PC-3 (cell line): ENCODE measurements at regions of chr9 and their contacts with region 1.

Region 1: DNA sequence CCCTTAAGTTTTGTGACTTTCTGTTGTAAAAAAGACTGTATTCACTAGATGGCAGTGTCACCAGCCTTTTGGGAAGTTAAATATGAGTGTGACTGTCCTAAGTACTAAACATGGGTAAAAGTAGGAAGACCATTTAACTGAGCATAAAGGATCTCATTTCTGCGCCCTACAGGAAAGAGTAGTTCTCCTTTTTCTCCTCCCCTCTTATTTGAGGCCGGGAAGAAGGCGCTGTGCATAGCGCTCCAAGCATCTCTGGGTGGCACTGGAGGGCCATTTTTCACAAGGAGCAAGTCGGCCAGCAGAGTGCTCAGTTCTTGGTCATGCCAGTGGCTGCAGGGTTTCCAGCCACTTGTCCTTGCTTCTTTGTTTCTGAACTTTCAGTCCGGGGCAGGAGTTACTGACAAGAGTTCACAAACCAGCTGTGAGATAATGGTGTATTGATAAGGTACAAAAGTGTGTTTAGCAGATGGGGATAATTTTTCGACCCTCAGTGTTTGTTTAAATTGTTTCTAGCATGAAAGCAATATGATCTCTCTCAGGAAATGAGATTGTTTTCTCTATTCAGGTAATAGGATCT is 227.6 kb upstream of the DMRT1 start:
- DNase-seq: peak; percentile 77
- ATAC-seq: peak; percentile 97
- H3K4me3 ChIP-seq: no peak overlapping the region
- H3K27ac ChIP-seq: no peak overlapping the region
- H3K4me1 ChIP-seq: peaks cover 4% of the 10 kb centered on the region; the same call in 1 of the 2 replicates
- H3K27me3 ChIP-seq: no peaks in the 10 kb centered on the region
- CTCF ChIP-seq: peak; percentile 94

Region 2: DNA sequence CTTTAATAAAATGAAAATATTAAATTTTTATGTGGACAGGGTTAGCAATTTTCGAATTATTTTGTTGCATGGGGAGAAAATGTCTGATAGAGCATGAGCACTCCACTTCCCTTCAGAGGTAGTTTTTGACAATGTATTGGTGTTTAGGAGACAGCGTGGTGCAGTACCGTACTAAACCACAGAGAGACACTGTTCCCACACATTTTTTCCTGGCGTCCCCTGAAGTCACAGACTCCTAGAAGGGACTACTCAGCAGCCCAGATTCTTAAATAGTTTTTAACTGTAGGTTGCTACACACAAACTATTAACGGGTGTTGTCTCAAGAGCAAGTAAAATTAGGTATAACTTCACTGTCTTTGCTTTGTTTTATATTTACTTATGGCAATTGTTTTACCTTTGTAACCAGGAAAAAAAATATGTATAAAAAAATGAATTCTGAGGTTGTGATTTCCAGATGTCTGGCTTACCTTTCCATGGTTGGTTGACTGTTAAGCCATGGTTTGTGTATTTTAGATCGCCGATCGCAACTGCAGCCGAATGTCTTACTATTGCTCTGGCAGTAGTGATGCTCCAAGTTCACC is 228.0 kb before region 1 on chr9:
- CTCF ChIA-PET with region 1: no interaction called
- POLR2A ChIA-PET with region 1: no interaction called
- intact Hi-C with region 1: loop called (anchors 2 kb)
- DNase-seq: peak; percentile 83
- ATAC-seq: peak; percentile 91
- H3K4me3 ChIP-seq: no peak overlapping the region
- H3K27ac ChIP-seq: no peak overlapping the region
- H3K4me1 ChIP-seq: no peaks in the 10 kb centered on the region
- H3K27me3 ChIP-seq: no peaks in the 10 kb centered on the region
- CTCF ChIP-seq: peak; percentile 86

Region 3: GRCh38 chr9:591292-591691 is 22.6 kb before region 1 on chr9:
- CTCF ChIA-PET with region 1: no interaction called
- POLR2A ChIA-PET with region 1: no interaction called
- intact Hi-C with region 1: no loop called
- DNase-seq: peak; percentile 29
- ATAC-seq: peak; percentile 25; the same call in 1 of the 2 replicates
- H3K4me3 ChIP-seq: no peak overlapping the region
- H3K27ac ChIP-seq: peak overlapping the region; percentile 93
- H3K4me1 ChIP-seq: peaks cover 21% of the 10 kb centered on the region
- H3K27me3 ChIP-seq: no peaks in the 10 kb centered on the region
- CTCF ChIP-seq: no peak

Region 4: DNA sequence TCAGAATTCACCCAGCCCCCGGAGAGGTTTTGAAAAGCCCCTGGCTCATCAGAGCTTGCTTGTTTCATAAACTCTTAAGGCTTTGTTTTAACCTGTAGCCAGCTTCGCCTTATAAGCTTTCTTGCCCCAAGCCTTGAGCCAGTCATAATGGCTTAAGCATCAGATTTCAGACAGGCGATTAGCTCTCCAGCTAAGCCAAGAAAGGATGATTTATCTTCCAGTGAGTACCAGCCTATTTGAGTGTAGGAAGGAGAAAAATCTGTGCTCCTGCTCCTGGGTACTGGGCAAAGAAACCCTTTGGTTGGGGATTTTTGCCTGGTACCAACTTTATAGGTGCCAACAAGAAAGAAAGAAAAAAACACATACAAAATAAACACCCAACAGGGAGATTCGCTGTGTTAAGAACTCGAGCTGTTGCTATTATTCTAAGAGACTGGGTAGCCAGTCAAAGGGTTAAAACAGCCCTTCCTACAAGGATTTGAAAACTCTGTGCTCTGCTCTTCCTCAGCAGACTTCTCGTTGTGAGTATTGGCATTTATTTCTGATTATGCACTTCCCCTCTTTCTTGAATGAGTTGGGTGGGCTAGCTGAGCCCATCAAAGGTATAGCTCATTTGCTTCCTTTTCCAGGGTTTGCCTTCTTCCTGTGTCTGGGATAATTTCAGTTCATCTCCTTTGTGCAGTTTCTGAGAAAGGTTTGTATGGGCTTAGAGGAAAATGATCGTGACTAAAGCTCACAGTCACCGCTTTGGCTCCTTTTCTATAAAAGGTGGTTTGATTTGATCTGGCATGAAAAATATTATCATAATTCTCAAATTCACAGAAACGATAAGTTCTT is 70.4 kb after region 1 on chr9:
- CTCF ChIA-PET with region 1: no interaction called
- POLR2A ChIA-PET with region 1: no interaction called
- intact Hi-C with region 1: loop called (anchors 5 kb)
- DNase-seq: peak; percentile 53
- ATAC-seq: peak; percentile 25
- H3K4me3 ChIP-seq: peak overlapping the region; percentile 63
- H3K27ac ChIP-seq: peak overlapping the region; percentile 93
- H3K4me1 ChIP-seq: peaks cover 57% of the 10 kb centered on the region
- H3K27me3 ChIP-seq: no peaks in the 10 kb centered on the region
- CTCF ChIP-seq: no peak

Region 5: DNA sequence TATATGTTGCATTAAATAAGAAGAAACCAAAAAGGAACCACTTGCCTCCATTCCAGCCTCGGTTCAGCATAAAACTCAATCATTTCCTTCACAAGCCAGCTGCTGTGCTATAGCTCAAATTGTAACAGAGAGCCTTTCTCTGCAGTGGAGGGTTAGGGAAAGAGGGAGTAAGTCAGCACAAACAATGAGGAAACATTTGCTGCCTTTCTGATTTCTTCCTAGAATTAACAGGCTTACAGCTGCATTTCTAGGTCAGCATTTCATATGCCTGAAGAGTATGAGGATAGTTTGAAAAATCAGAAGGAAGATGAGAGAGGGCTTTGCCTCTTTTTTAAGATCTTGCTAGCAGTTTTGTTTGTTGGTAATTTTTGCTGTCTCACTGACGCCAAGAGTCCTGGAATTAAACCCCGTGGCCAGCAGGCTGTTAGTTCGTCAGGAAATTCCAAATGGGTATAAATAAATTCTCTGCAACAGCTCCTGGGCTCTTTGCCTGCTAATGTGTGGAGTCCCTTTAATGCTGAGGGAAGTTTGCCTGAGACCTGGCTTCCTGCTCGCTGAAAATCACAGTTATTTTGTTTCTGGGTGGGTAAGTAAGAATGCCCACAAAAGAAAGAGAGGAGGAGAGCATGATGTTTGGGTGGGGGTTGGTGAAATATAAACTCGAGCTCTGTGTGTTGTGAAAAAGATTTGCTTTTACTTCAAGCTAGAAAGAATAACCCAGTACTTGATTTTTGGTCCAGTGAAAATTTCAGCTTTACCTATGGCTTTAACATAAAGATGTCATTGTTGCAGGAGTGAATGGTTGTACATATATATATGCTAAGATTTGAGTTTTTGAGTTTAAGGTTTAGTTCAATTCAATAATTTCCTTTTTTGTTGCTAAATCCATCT is 79.6 kb after region 1 on chr9:
- CTCF ChIA-PET with region 1: no interaction called
- POLR2A ChIA-PET with region 1: no interaction called
- intact Hi-C with region 1: loop called (anchors 5 kb)
- DNase-seq: no peak
- ATAC-seq: no peak
- H3K4me3 ChIP-seq: peak overlapping the region; percentile 37; the same call in 1 of the 2 replicates
- H3K27ac ChIP-seq: peak overlapping the region; percentile 77
- H3K4me1 ChIP-seq: peaks cover 54% of the 10 kb centered on the region
- H3K27me3 ChIP-seq: no peaks in the 10 kb centered on the region
- CTCF ChIP-seq: no peak

Region 6: DNA sequence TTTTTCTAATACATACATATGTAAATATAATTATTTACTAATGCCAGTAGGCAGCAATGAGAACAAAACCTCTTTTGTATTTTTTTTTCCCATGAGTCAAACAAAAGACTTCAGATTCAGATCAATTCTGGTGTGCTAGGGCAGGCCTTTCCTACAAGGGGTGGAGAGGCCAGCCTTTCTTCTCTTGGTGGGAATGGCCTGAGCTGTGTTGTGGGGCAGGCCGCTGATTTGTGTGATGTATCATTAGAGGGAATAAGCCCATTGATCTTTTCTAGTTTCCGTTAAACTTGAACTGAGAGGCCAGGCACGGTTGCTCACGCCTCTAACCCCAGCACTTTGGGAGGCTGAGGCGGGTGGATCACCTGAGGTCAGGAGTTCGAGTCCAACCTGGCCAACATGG is 112.2 kb after region 1 on chr9:
- CTCF ChIA-PET with region 1: no interaction called
- POLR2A ChIA-PET with region 1: no interaction called
- intact Hi-C with region 1: no loop called
- DNase-seq: no peak
- ATAC-seq: no peak; the same call in 1 of the 2 replicates
- H3K4me3 ChIP-seq: no peak overlapping the region
- H3K27ac ChIP-seq: no peak overlapping the region
- H3K4me1 ChIP-seq: peaks cover 6% of the 10 kb centered on the region; the same call in 1 of the 2 replicates
- H3K27me3 ChIP-seq: no peaks in the 10 kb centered on the region
- CTCF ChIP-seq: no peak

Region 7: GRCh38 chr9:757246-757881 is 143.5 kb after region 1 on chr9:
- CTCF ChIA-PET with region 1: interaction called, 3 read pairs
- POLR2A ChIA-PET with region 1: no interaction called
- intact Hi-C with region 1: loop called (anchors 1 kb)
- DNase-seq: peak; percentile 57
- ATAC-seq: peak; percentile 82
- H3K4me3 ChIP-seq: no peak overlapping the region
- H3K27ac ChIP-seq: no peak overlapping the region
- H3K4me1 ChIP-seq: peaks cover 10% of the 10 kb centered on the region
- H3K27me3 ChIP-seq: no peaks in the 10 kb centered on the region
- CTCF ChIP-seq: peak; percentile 57

Region 8: DNA sequence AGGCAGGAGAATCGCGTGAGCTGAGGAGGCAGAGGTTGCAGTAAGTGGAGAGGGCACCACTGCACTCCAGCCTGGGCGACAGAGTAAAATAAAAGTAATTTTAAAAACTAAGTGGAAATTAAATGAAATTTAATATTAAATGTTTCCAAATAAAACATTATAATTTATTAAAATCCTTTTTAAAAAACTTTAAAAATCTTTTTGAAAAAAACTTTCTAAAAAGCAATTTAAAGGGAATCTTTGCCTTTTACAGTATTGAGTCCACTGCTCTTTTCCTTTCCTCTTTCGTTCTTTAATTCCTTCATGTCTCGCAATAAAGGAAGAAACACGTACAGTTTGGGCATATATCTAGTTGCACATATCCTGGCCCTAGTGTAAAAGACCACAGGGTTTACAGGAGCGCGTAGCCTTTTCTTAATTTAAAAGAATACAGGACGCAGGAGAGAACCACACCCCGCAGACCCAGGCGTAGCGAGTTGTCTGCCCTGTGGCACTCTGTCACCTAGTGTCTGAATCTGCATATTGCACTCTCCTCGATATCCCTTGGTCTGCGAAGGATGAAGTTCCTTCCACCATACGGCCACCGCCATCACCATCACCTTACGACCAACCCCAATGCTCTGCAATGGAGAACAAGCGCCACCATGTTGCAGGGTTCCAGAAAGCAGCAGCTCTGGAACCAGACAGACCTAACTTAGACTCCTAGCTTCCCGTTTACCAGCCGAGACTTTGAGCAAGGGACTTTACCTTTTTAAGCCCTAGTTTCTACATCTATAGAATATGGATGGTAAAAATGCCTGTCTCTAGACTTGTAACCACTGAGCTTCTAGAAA is 150.0 kb after region 1 on chr9:
- CTCF ChIA-PET with region 1: interaction called, 3 read pairs
- POLR2A ChIA-PET with region 1: no interaction called
- intact Hi-C with region 1: loop called (anchors 2 kb)
- DNase-seq: peak; percentile 84
- ATAC-seq: peak; percentile 99
- H3K4me3 ChIP-seq: no peak overlapping the region
- H3K27ac ChIP-seq: no peak overlapping the region
- H3K4me1 ChIP-seq: peaks cover 8% of the 10 kb centered on the region; the same call in 1 of the 2 replicates
- H3K27me3 ChIP-seq: no peaks in the 10 kb centered on the region
- CTCF ChIP-seq: peak; percentile 88